GM10248 (cell line): ENCODE measurements at regions of chr20 and their contacts with region 1.

Region 1: DNA sequence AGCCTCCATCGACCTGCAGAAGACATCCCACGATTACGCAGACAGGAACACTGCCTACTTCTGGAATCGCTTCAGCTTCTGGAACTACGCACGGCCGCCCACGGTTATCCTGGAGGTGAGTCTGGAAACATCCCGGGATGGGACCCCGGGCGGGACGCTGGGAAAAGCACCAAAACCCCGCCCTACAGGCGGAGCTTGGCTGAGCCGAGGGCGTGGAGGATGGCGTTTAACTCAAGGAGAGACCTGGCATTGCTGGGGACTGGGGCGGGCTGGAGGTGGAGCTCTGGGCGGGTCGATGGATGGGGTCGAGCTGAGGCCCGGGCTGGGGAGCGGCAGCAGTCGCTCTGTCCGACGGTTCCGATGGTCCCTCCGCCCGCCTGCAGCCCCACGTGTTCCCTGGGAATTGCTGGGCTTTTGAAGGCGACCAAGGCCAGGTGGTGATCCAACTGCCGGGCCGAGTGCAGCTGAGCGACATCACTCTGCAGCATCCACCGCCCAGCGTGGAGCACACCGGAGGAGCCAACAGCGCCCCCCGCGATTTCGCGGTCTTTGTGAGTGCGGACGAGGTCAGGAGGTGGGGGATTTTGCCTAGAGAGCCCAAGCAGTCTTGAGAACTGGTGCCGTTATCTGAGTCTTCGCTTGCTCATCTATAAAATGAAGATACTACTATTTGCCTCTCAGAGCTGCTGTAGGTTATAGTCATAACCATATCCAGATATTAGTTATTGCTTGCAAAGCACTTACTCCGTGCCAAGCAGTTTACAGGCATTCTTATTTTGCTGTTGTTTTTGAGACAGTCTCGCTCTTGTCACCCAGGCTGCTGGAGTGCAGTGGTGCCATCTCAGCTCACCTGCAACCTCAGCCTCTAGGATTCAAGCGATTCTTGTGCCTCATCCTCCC is 3.8 kb downstream of the SPAG4 start:
- DNase-seq: peak; percentile 81
- CTCF ChIP-seq: peak; percentile 75

Region 2: GRCh38 chr20:35601008-35601973 is 18.2 kb before region 1 on chr20:
- CTCF ChIA-PET with region 1: interaction called, 87 read pairs
- POLR2A ChIA-PET with region 1: no interaction called
- DNase-seq: peak; percentile 84
- CTCF ChIP-seq: peak; percentile 81

Region 3: DNA sequence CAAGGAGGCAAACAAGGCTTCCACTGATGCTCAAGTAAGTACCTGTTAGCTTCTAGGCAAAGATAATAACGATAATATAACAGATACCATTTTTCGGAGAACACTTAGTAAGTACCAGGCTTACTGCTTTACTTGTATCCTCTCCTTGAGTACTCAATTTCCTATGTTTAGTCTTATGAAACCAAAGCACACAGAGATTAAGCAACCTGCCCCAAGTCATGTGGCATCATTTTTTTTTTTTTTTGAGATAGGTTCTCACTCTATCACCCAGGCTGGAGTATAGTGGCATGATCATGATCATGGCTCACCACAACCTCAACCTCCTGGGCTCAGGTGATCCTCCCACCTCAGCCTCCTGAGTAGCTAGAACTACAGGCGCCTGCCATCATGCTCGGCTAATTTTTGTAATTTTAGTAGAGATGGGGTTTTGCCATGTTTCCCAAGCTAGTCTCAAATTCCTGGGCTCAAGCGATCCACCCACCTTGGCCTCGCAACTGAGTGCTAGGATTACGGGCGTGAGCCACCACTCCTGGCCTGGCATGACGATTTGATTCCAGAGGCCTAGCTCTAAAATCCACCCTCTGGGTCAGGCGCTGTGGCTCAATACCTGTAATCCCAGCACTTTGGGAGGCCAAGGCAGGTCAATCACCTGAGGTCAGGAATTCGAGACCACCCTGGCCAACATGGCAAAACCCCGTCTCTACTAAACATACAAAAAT is 10.1 kb after region 1 on chr20:
- CTCF ChIA-PET with region 1: interaction called, 41 read pairs
- POLR2A ChIA-PET with region 1: no interaction called
- DNase-seq: no peak
- CTCF ChIP-seq: no peak

Region 4: GRCh38 chr20:35635652-35636051 is 16.2 kb after region 1 on chr20:
- CTCF ChIA-PET with region 1: interaction called, 41 read pairs
- POLR2A ChIA-PET with region 1: no interaction called
- DNase-seq: no peak
- CTCF ChIP-seq: no peak

Region 5: DNA sequence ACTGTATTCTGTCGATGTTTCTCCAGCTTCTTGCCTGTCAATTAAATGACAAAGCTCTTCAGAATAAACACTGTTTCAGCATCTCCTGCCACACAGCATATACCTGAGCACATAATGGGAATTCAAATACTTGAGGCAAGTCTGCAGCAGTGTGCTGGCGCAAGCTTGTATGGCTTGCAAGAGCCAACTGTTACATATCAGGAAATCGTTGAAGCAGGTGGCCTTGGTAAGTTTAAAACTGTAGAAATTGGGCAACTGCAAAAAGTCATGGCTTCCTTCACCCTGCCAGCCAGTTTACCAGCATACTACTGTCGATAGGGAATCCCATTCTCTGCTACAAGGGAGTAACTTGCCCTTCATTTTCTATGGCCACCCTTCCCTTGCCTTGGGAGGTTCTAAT is 22.3 kb after region 1 on chr20:
- CTCF ChIA-PET with region 1: interaction called, 18 read pairs
- POLR2A ChIA-PET with region 1: no interaction called
- DNase-seq: no peak
- CTCF ChIP-seq: no peak

Region 6: GRCh38 chr20:35664544-35665221 is 45.2 kb after region 1 on chr20 and contains the starts of genes CPNE1 and RBM12:
- CTCF ChIA-PET with region 1: interaction called, 25 read pairs
- POLR2A ChIA-PET with region 1: interaction called, 14 read pairs
- DNase-seq: peak; percentile 99
- CTCF ChIP-seq: no peak